MCF 10A (cell line): ENCODE measurements at regions of chr5 and their contacts with region 1.

Region 1: GRCh38 chr5:34522599-34523386 is 133.3 kb upstream of the RAI14 start:
- DNase-seq: peak; percentile 85
- H3K4me3 Mint-ChIP-seq: no peak overlapping the region
- H3K27ac Mint-ChIP-seq: no peak overlapping the region
- H3K4me1 Mint-ChIP-seq: peaks cover 20% of the 10 kb centered on the region
- H3K27me3 Mint-ChIP-seq: no peaks in the 10 kb centered on the region
- CTCF ChIP-seq: peak; percentile 65

Region 2: DNA sequence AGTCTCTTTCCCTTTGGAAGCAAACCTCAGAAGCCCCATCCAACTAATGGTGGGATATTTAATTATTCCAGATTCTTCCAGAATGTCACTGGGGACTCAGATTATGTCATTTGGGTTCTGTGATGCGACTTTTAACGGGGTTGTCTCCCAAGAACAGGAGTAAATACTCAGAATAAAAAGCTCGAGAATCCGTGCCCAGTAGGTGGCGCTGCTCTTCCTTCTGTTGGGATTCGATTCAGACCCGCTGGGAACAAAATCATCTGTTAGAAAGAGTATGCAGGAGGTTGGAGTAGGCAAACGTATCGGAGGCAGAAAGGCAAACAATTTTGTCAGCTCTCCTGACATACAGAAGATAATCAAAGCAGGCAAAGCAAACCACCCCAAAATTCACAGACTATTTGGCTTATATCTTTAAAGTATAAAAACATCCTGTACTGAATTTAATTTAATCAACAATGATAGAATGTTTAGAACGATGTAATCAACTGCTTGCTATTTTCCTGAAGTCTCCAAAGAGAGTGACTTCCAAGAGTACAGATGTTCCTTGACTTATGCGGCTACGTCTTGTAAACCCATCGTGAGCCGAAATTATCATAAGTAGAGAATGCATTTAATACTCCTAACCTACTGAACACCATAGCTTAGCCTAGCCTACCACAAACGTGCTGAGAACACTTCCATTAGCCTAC is 36.5 kb before region 1 on chr5:
- CTCF ChIA-PET with region 1: interaction called, 25 read pairs
- POLR2A ChIA-PET with region 1: interaction called, 4 read pairs
- intact Hi-C with region 1: loop called (anchors 1 kb)
- DNase-seq: peak; percentile 91
- H3K4me3 Mint-ChIP-seq: no peak overlapping the region
- H3K27ac Mint-ChIP-seq: no peak overlapping the region
- H3K4me1 Mint-ChIP-seq: peaks cover 29% of the 10 kb centered on the region
- H3K27me3 Mint-ChIP-seq: peaks cover 4% of the 10 kb centered on the region
- CTCF ChIP-seq: peak; percentile 74

Region 3: GRCh38 chr5:34511045-34511444 is 11.7 kb before region 1 on chr5:
- CTCF ChIA-PET with region 1: interaction called, 17 read pairs
- POLR2A ChIA-PET with region 1: interaction called, 3 read pairs
- intact Hi-C with region 1: no loop called
- DNase-seq: no peak
- H3K4me3 Mint-ChIP-seq: no peak overlapping the region
- H3K27ac Mint-ChIP-seq: no peak overlapping the region
- H3K4me1 Mint-ChIP-seq: peaks cover 16% of the 10 kb centered on the region
- H3K27me3 Mint-ChIP-seq: no peaks in the 10 kb centered on the region
- CTCF ChIP-seq: no peak

Region 4: GRCh38 chr5:34656001-34656699 is 133.4 kb after region 1 on chr5 and contains the start of gene RAI14:
- CTCF ChIA-PET with region 1: interaction called, 9 read pairs
- POLR2A ChIA-PET with region 1: interaction called, 7 read pairs
- intact Hi-C with region 1: loop called (anchors 1 kb)
- DNase-seq: peak; percentile 74
- H3K4me3 Mint-ChIP-seq: peak within 1 kb of the TSS; percentile 73
- H3K27ac Mint-ChIP-seq: peak within 1 kb of the TSS; percentile 92
- H3K4me1 Mint-ChIP-seq: peaks cover 15% of the 10 kb centered on the region
- H3K27me3 Mint-ChIP-seq: no peaks in the 10 kb centered on the region
- CTCF ChIP-seq: no peak
- total RNA-seq, gene RAI14: 47.6 and 47.9 TPM in 2 replicates

Region 5: DNA sequence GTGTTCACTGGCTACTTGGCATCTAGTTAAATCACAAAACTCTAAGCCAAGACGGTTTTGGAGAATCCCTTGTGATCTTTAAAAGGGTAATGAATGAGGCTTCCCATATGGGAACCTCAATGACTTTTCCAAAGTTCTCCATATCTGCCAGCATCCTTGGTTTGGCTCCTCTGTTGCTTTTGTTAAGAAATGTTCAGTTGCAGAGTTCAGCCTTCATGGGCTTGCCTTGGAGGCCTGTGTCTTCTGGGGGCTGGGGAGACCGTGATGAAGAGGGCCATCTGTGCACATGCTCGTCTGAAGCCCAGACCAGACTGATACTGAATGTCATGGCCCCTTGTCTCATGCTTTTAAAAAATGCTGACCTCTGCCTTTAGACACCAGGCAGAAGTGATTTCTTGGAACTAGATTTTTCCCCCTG is 217.6 kb after region 1 on chr5:
- CTCF ChIA-PET with region 1: no interaction called
- POLR2A ChIA-PET with region 1: no interaction called
- intact Hi-C with region 1: no loop called
- DNase-seq: no peak
- H3K4me3 Mint-ChIP-seq: no peak overlapping the region
- H3K27ac Mint-ChIP-seq: no peak overlapping the region
- H3K4me1 Mint-ChIP-seq: peaks cover 24% of the 10 kb centered on the region
- H3K27me3 Mint-ChIP-seq: no peaks in the 10 kb centered on the region
- CTCF ChIP-seq: no peak

Region 6: GRCh38 chr5:34803974-34804732 is 281.4 kb after region 1 on chr5:
- CTCF ChIA-PET with region 1: interaction called, 3 read pairs
- POLR2A ChIA-PET with region 1: no interaction called
- intact Hi-C with region 1: loop called (anchors 5 kb)
- DNase-seq: no peak
- H3K4me3 Mint-ChIP-seq: no peak overlapping the region
- H3K27ac Mint-ChIP-seq: no peak overlapping the region
- H3K4me1 Mint-ChIP-seq: no peaks in the 10 kb centered on the region
- H3K27me3 Mint-ChIP-seq: no peaks in the 10 kb centered on the region
- CTCF ChIP-seq: no peak

Region 7: DNA sequence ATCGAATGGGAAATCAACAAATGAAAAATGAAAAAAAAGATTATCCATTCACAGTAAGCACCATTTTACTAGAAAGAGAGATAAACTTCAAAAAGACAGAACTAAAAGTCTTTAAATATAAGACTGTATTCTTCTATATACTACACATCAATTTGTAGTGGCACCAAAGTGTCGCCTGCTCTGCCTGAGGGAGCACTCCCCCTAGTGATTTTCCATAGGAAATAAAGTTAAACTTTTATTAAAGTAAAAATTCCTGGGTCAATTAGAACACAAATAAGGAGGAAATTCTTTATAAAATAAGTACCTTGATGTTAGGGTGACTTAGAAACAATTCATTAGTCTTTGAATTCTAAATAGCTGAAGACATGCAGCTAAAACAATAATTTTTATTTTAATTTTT is 382.8 kb after region 1 on chr5:
- CTCF ChIA-PET with region 1: interaction called, 39 read pairs
- POLR2A ChIA-PET with region 1: no interaction called
- intact Hi-C with region 1: no loop called
- DNase-seq: peak; percentile 18
- H3K4me3 Mint-ChIP-seq: no peak overlapping the region
- H3K27ac Mint-ChIP-seq: no peak overlapping the region
- H3K4me1 Mint-ChIP-seq: no peaks in the 10 kb centered on the region
- H3K27me3 Mint-ChIP-seq: no peaks in the 10 kb centered on the region
- CTCF ChIP-seq: peak; percentile 34